Motor neuron (in vitro differentiated cells): ENCODE measurements at regions of chr21 and their contacts with region 1.

Region 1: DNA sequence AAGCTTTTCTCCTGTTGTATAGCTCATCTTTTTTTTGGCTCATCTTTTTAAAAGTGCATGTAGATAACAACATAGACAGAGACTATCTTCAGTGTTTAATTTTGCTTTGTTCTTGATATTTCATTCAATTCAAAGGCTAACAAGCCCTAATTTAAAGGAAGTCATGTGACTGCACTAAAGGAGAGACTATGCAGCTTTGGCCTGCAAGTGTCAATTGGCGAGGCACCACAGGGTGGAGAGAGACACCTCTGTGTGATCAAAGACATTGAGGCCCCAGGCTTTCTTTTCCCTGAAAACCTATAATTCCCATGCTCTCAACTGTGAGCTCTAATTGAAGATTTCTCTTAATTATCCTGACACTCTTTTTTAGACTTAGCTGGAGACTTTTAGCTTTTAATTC is 53.6 kb downstream of the CHODL start:
- ATAC-seq: no peak
- H3K4me3 ChIP-seq: no peak overlapping the region
- H3K27ac ChIP-seq: no peak overlapping the region
- H3K4me1 ChIP-seq: no peaks in the 10 kb centered on the region

Region 2: DNA sequence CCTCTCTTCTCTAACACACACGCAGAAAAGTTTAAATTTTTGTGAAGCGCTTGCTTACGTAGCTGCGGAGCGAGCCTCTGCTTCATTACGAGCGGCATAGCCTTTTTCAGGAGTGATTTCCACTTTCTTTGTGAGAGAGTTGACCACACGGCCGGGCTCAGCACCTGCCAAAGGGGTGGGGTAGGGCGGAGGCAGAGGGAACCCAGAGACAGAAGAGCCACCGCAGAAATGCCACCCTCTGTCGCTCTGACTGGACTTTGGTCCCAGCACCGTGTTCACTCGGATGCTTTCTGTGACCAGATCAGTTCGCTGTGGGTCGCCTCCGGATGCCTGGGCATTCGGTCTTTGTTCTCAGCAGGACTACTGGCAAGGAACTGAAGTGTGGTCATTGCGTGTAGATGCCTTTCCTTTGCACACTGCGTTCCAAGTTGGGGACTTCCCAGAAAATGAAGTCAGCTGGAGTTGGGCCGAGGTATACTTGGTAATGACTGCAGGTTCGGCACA is 52.7 kb before region 1 on chr21:
- in situ Hi-C with region 1: no loop called
- ATAC-seq: peak in 6 of 8 experiments; percentile 54 to 67 (median 62)
- H3K4me3 ChIP-seq: peak overlapping the region; percentile 42 to 67 (median 48)
- H3K27ac ChIP-seq: no peak overlapping the region
- H3K4me1 ChIP-seq: peaks cover 4% of the 10 kb centered on the region in 2 donors

Region 3: GRCh38 chr21:18384771-18385170 is 86.5 kb after region 1 on chr21:
- in situ Hi-C with region 1: loop called in 1 of 9 experiments (anchors 25 kb)
- ATAC-seq: peak in 2 of 8 experiments; percentile 27 to 45
- H3K4me3 ChIP-seq: no peak overlapping the region
- H3K27ac ChIP-seq: no peak overlapping the region
- H3K4me1 ChIP-seq: no peaks in the 10 kb centered on the region